MCF 10A (cell line): ENCODE measurements at regions of chr3 and their contacts with region 1.

Region 1: DNA sequence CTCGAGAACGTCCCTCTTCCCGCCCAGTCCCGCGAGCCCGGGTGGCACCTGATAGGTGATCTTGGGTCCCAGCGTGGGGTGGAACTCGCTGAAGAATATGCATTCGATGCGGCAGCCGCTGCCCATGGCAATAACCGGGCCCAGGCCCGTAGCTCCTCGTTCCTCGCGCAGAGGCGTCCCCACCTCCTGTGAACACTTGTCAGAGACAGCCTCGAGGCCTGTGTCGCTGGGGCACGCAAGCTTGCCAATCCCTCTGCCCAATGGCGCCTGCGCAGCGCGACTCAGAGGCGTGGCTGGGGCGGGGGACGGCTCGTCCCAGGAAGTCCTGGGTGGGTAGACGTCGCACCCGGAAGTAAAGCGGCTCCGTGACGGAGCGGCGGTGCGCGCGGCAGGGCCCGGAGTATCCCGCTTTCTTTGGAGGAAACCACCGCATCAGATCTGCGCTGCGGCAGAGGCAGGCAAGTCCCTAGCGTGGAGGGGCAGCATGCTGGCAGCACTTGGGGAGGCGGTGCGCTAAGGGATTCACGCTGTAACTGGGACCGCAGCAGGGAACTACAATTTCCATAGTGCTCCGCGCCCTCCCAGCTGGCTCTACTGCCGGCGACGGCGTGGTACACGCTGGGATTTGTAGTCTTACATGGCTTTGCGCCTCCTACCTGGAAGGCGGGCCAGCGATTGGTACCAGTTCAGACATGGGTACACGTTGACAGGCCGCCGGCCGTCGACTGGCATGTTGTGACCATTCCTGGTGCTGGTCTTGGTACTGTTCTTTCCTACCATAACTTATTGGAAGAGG is at the starts of genes CYB561D2 and NPRL2:
- DNase-seq: peak; percentile 95
- H3K4me3 Mint-ChIP-seq: peak within 1 kb of the TSS; percentile 87
- H3K27ac Mint-ChIP-seq: peak within 1 kb of the TSS; percentile 95
- H3K4me1 Mint-ChIP-seq: peaks cover 26% of the 10 kb centered on the region
- H3K27me3 Mint-ChIP-seq: no peaks in the 10 kb centered on the region
- CTCF ChIP-seq: no peak
- total RNA-seq, gene CYB561D2: 24.0 and 24.1 TPM in 2 replicates
- total RNA-seq, gene NPRL2: 21.1 and 22.1 TPM in 2 replicates

Region 2: GRCh38 chr3:50088725-50089608 is 261.8 kb before region 1 on chr3 and contains the start of gene RBM5:
- CTCF ChIA-PET with region 1: no interaction called
- POLR2A ChIA-PET with region 1: no interaction called
- intact Hi-C with region 1: no loop called
- DNase-seq: peak; percentile 93
- H3K4me3 Mint-ChIP-seq: peak within 1 kb of the TSS; percentile 92
- H3K27ac Mint-ChIP-seq: peak within 1 kb of the TSS; percentile 99
- H3K4me1 Mint-ChIP-seq: peaks cover 10% of the 10 kb centered on the region
- H3K27me3 Mint-ChIP-seq: no peaks in the 10 kb centered on the region
- CTCF ChIP-seq: no peak
- total RNA-seq, gene RBM5: 138 TPM in 2 replicates

Region 3: GRCh38 chr3:50327943-50328691 is 22.6 kb before region 1 on chr3 and contains the start of gene TUSC2:
- CTCF ChIA-PET with region 1: interaction called, 5 read pairs
- POLR2A ChIA-PET with region 1: interaction called, 14 read pairs
- intact Hi-C with region 1: no loop called
- DNase-seq: peak; percentile 97
- H3K4me3 Mint-ChIP-seq: peak within 1 kb of the TSS; percentile 86
- H3K27ac Mint-ChIP-seq: peak within 1 kb of the TSS; percentile 90
- H3K4me1 Mint-ChIP-seq: no peaks in the 10 kb centered on the region
- H3K27me3 Mint-ChIP-seq: no peaks in the 10 kb centered on the region
- CTCF ChIP-seq: no peak
- total RNA-seq, gene TUSC2: 14.5 and 20.4 TPM in 2 replicates

Region 4: DNA sequence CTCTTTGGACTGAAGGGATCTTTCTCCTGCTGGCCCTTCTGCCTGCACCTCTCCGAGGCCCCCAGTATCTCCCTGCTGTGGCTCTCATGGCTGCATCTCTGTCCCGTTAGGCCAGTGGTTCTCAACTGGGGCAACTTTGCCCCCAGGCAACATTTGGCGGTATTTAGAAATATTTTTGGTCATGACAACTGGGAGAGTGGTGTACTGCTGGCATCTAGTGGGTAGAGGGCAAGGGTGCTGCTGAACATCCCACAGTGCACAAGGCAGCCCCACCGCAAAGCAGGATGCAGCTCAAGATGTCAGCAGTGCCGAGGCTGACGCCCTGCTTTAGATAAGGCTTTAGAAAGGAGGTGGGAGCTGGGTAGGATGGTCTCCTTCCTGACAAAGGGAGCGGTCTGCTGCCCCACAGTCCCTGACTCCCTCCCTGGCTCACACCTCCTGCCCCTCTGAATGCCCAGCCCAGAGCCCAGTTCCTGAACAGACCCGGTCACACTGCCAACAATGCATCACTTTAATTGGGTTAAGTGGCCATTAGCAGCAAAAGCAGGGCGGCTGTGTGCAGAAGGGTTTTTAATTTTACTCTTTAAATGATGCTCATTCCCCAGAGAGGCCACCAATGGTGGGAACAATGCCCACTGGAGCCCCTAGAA is 77.4 kb after region 1 on chr3:
- CTCF ChIA-PET with region 1: interaction called, 5 read pairs
- POLR2A ChIA-PET with region 1: no interaction called
- intact Hi-C with region 1: loop called (anchors 5 kb)
- DNase-seq: peak; percentile 47
- H3K4me3 Mint-ChIP-seq: no peak overlapping the region
- H3K27ac Mint-ChIP-seq: no peak overlapping the region
- H3K4me1 Mint-ChIP-seq: no peaks in the 10 kb centered on the region
- H3K27me3 Mint-ChIP-seq: peaks cover 20% of the 10 kb centered on the region
- CTCF ChIP-seq: peak; percentile 22